ENCODE measurements at regions of chr16 and their contacts with region 1.

Region 1: GRCh38 chr16:88442727-88443576 is 10.1 kb upstream of the ZFPM1 start:
- DNase-seq: peak; percentile 83
- H3K4me3 ChIP-seq: no peak overlapping the region
- H3K27ac ChIP-seq: no peak overlapping the region
- H3K4me1 ChIP-seq: peaks cover 0 to 3% (median 1%) of the 10 kb centered on the region in 4 donors
- H3K27me3 ChIP-seq: peaks cover 21% of the 10 kb centered on the region
- CTCF ChIP-seq: peak; percentile 94 to 99 (median 96)
- EP300 ChIP-seq: no peak
- POLR2A ChIP-seq: no peak

Region 2: GRCh38 chr16:88527186-88527936 is 84.4 kb after region 1 on chr16:
- in situ Hi-C with region 1: loop called in 1 of 4 experiments (anchors 10 kb)
- intact Hi-C with region 1: loop called (anchors 2 kb)
- DNase-seq: peak; percentile 71
- H3K4me3 ChIP-seq: no peak overlapping the region
- H3K27ac ChIP-seq: no peak overlapping the region
- H3K4me1 ChIP-seq: peaks cover 14 to 26% (median 20%) of the 10 kb centered on the region in 4 donors
- H3K27me3 ChIP-seq: peaks cover 6% of the 10 kb centered on the region
- CTCF ChIP-seq: peak; percentile 84 to 93 (median 88)
- EP300 ChIP-seq: no peak
- POLR2A ChIP-seq: no peak

Region 3: DNA sequence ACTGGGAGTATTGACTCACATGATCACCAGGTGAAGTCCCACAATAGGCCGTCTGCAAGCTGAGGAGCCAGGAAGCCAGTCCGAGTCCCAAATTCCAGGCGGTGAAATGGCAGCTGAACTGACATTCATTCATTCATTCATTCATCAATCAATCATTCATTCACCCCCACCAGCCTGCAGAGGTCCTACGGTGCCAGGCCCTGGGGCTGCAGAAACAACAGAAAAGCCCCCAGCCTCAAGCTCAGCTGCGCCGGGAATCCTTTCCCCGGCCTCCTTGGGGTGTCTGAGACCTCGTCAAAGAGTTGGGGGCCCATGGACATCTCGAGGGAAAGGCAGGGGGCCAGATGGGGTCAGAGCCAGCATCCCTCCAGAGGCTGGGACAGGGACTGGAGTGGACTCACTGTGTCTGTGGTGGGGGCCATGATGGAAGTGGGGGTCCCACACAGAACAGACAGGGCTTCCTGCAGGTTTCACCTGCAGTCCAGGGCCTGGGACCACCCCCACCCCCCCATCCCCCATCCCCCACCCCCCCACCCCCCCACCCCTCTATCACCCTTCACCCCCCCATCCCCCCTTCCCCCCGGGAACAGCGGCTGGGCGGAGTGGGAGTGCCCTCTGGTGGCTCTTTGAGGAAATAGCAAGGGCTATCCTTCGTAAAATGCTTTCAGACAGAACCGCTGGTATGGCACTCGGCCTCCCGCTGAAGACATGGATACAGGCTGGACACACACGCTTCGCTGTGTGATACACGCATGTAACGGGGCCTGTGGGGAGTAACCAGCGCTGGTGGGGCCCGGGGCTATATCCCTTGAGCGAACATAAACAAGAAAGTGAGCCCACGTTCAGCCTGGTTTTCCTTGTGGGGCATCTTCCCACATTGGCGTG is 118.8 kb after region 1 on chr16:
- in situ Hi-C with region 1: loop called in 1 of 4 experiments (anchors 25 kb)
- intact Hi-C with region 1: loop called (anchors 5 kb)
- DNase-seq: peak; percentile 37
- H3K4me3 ChIP-seq: peak overlapping the region in 2 of 4 donors; percentile 5 to 25
- H3K27ac ChIP-seq: no peak overlapping the region
- H3K4me1 ChIP-seq: peaks cover 0 to 12% (median 8%) of the 10 kb centered on the region in 4 donors
- H3K27me3 ChIP-seq: peaks cover 17% of the 10 kb centered on the region
- CTCF ChIP-seq: peak; percentile 50 to 72 (median 61)
- EP300 ChIP-seq: no peak
- POLR2A ChIP-seq: no peak

Region 4: GRCh38 chr16:88569985-88570690 is 127.2 kb after region 1 on chr16 and contains the start of gene ZC3H18:
- in situ Hi-C with region 1: loop called in 1 of 4 experiments (anchors 25 kb)
- intact Hi-C with region 1: no loop called
- DNase-seq: peak; percentile 98
- H3K4me3 ChIP-seq: peak within 1 kb of the TSS; percentile 71 to 94 (median 92)
- H3K27ac ChIP-seq: peak within 1 kb of the TSS; percentile 81 to 90 (median 90)
- H3K4me1 ChIP-seq: peaks cover 11 to 22% (median 16%) of the 10 kb centered on the region in 4 donors
- H3K27me3 ChIP-seq: no peaks in the 10 kb centered on the region
- CTCF ChIP-seq: peak in 1 of 5 experiments; percentile 24
- EP300 ChIP-seq: no peak
- POLR2A ChIP-seq: peak; percentile 59
- total RNA-seq, gene ZC3H18: 17.9 to 50.5 (median 25.5) TPM

Measured in transverse colon (tissue), 4 donors.